Activated naive CD8-positive, alpha-beta T cell treated with anti-CD3 and anti-CD28 coated beads, Interleukin-2, amount 10 ng/mL, durations not matched to agents 7 days and 5 days (primary cell): ENCODE measurements at regions of chr18 and their contacts with region 1.

Region 1: DNA sequence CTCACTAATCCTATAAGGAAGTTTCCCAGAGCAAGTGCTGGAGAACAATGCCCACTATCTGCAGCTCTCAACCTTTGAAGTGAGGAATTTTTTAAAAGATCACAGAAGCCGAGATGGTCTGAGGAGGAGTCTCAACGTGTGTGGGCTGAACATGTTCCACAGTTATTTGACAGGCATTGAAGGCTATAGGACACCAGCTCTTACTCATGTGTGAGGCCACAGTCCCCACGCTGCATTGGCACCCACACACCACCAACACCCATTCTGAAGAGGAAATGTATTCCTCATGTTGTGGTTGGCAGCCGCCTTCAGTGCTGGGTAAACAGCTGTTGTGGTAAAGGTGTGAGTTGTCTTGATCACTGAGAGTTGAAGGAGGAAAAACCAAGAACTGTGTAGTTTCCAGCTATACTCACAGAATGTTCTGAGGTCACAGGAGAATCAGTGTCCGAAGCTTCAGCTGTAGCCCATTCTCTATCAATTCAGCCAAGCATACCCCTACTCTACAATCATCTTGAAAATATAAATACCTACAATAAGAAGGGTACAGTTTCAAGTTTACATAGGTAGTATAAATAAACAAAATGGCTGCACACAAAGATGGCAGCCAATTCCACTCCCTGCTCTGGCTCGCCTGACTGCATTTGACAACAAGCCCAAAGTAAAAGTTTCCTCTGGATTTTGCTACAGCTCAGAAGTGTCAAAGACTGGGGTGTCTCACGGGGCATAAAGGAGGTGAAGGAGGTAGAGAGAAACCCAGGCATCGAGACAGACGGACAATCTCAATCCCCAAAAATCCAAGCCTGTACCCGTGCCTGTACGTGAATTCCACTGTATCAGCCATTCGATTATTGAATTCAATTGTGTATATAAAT is 12.1 kb downstream of the CD226 start:
- DNase-seq: peak; percentile 75
- ATAC-seq: peak; percentile 98
- H3K4me3 Mint-ChIP-seq: no peak overlapping the region
- H3K27ac Mint-ChIP-seq: no peak overlapping the region
- H3K4me1 Mint-ChIP-seq: peaks cover 23% of the 10 kb centered on the region
- H3K27me3 Mint-ChIP-seq: no peaks in the 10 kb centered on the region

Region 2: GRCh38 chr18:69898241-69898861 is 37.2 kb before region 1 on chr18:
- POLR2A ChIA-PET with region 1: interaction called, 25 read pairs
- DNase-seq: peak; percentile 44
- ATAC-seq: peak; percentile 63
- H3K4me3 Mint-ChIP-seq: peak overlapping the region; percentile 81
- H3K27ac Mint-ChIP-seq: peak overlapping the region; percentile 95
- H3K4me1 Mint-ChIP-seq: peaks cover 53% of the 10 kb centered on the region
- H3K27me3 Mint-ChIP-seq: no peaks in the 10 kb centered on the region

Region 3: DNA sequence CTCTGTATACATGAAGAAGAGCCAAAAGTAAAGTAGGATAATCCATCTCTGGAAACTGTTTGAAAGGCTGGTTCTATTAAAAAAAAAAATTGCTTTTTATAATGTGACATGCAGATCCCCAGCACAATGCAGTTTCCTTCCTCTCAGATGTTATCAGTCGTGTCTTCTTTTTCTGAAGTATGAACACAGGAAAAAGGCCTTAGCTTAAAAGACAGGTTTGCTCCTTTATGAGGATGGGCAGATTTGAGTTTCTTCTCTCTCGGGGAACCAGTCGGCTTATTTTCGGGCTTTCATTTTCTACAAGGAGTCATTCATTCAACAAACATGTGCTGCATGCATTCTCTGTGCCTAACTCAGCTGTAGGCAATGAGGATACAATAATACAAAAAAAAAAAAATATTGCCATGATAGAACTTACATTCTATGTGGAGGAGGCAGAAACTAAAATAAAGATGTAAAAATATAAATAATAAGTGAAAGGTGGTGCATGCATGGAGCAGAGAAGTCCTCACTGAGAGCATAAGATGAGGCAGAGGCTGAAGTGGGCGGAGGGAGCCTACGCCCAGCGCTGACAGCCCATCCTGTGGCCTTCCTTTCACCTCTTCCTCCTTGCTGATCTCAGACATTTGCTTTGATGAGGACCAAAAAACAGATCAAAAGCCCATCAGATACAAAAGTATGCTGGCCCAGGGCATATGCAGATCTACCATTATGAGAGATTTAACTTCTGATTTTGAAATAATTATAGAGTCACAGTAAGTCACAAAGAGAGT is 12.0 kb after region 1 on chr18 and contains the start of gene CD226:
- POLR2A ChIA-PET with region 1: interaction called, 11 read pairs
- DNase-seq: no peak
- ATAC-seq: peak; percentile 76
- H3K4me3 Mint-ChIP-seq: no peak within 1 kb of the TSS
- H3K27ac Mint-ChIP-seq: no peak within 1 kb of the TSS
- H3K4me1 Mint-ChIP-seq: peaks cover 48% of the 10 kb centered on the region
- H3K27me3 Mint-ChIP-seq: no peaks in the 10 kb centered on the region
- total RNA-seq, gene CD226: 46.4 to 50.9 TPM